ENCODE measurements at regions of chr10 and their contacts with region 1.

Region 1: GRCh38 chr10:6530211-6530840 is 49.8 kb downstream of the PRKCQ start:
- DNase-seq: peak; percentile 78
- H3K4me3 Mint-ChIP-seq: peak overlapping the region; percentile 80
- H3K27ac Mint-ChIP-seq: peak overlapping the region; percentile 99
- H3K4me1 Mint-ChIP-seq: peaks cover 75% of the 10 kb centered on the region
- H3K27me3 Mint-ChIP-seq: no peaks in the 10 kb centered on the region

Region 2: GRCh38 chr10:6498771-6499170 is 31.6 kb before region 1 on chr10:
- intact Hi-C with region 1: loop called (anchors 1 kb)
- DNase-seq: peak; percentile 63
- H3K4me3 Mint-ChIP-seq: peak overlapping the region; percentile 68
- H3K27ac Mint-ChIP-seq: peak overlapping the region; percentile 88
- H3K4me1 Mint-ChIP-seq: peaks cover 44% of the 10 kb centered on the region
- H3K27me3 Mint-ChIP-seq: no peaks in the 10 kb centered on the region

Region 3: DNA sequence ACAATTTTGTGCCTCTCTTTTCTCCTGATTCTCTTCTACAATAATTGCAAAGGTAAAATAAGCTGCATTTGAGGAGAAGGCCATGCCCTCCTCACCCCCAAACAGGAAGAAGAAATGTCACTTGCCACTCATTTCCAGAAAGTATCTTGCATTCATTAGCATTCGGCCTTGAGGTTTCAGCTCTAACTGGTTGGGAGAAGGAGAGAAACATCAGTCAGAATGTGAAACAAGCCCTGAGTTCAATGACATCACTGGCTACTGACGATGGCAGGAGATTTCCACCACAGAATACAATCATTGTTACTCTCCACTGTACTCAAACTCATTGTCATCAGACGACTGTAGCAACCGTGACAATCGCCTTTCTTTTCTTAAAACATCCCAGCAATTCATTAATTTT is 23.0 kb before region 1 on chr10:
- intact Hi-C with region 1: loop called (anchors 1 kb)
- DNase-seq: peak; percentile 57
- H3K4me3 Mint-ChIP-seq: peak overlapping the region; percentile 60
- H3K27ac Mint-ChIP-seq: peak overlapping the region; percentile 88
- H3K4me1 Mint-ChIP-seq: peaks cover 73% of the 10 kb centered on the region
- H3K27me3 Mint-ChIP-seq: no peaks in the 10 kb centered on the region

Region 4: GRCh38 chr10:6514844-6515780 is 15.2 kb before region 1 on chr10:
- intact Hi-C with region 1: loop called (anchors 1 kb)
- DNase-seq: no peak
- H3K4me3 Mint-ChIP-seq: no peak overlapping the region
- H3K27ac Mint-ChIP-seq: no peak overlapping the region
- H3K4me1 Mint-ChIP-seq: peaks cover 90% of the 10 kb centered on the region
- H3K27me3 Mint-ChIP-seq: peaks cover 2% of the 10 kb centered on the region

Region 5: DNA sequence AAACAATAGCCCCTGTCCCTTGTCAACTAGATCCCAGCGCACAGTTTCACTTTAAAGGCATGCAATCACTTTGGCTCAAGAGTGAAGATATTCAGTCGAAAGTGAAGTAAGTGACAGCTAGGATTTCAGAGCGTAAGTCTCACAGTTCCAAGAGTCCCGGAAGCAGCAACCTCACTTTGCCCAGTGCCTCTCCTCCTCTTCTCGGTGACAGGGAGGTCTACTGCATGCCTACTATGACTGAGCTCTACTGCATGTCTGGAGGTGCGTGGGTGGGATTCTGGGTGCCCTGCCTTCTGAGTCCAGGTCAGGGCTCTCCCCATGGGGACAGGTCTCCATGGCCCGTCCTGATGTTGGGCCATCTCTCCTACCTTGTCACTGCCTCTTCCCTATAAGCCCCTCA is 32.7 kb after region 1 on chr10:
- intact Hi-C with region 1: loop called (anchors 1 kb)
- DNase-seq: peak; percentile 43
- H3K4me3 Mint-ChIP-seq: peak overlapping the region; percentile 74
- H3K27ac Mint-ChIP-seq: peak overlapping the region; percentile 81
- H3K4me1 Mint-ChIP-seq: peaks cover 81% of the 10 kb centered on the region
- H3K27me3 Mint-ChIP-seq: no peaks in the 10 kb centered on the region